Right cardiac atrium (tissue), 5 donors: ENCODE measurements at regions of chr1 and their contacts with region 1.

Region 1: GRCh38 chr1:84632673-84633434 is 57.4 kb downstream of the SSX2IP start:
- DNase-seq: no peak
- ATAC-seq: peak; percentile 43 to 58
- H3K4me3 ChIP-seq: no peak overlapping the region
- H3K27ac ChIP-seq: no peak overlapping the region
- H3K4me1 ChIP-seq: peaks cover 1% of the 10 kb centered on the region
- H3K27me3 ChIP-seq: no peaks in the 10 kb centered on the region

Region 2: DNA sequence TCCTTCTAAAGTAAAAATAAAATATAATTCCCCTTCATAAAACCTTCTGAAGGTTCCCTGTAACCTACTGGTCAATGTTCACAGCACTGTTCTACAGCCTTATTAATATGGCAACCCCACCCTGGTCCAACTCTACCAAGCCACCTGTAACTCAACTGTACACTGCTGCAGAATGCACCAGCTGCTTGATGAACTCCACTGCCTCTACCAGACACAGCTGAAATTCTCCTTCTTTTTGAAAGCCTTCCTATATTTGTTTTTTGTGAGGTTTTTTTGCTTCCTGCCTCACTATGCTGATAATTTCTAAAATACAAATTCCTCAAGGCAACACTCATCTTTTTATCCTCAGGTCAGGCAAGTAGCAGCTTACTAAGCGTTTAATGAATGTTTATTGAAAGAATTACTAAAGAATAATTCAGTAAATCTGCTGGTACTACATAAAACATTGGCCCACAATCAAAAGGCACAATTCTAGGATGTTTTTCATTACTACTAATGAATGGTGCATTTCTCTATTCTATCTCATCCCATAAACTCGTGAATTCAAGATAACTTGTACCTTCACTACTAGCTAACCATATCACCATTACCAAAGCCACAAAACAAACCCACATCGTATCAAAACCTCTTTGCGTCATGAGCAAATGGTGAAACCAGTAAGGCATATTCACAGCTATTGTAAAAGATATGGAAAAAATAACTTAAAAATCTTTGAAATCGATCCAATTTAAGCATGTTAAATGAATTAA is 55.0 kb after region 1 on chr1:
- intact Hi-C with region 1: no loop called
- DNase-seq: no peak
- ATAC-seq: no peak
- H3K4me3 ChIP-seq: no peak overlapping the region
- H3K27ac ChIP-seq: no peak overlapping the region
- H3K4me1 ChIP-seq: no peaks in the 10 kb centered on the region
- H3K27me3 ChIP-seq: no peaks in the 10 kb centered on the region

Region 3: DNA sequence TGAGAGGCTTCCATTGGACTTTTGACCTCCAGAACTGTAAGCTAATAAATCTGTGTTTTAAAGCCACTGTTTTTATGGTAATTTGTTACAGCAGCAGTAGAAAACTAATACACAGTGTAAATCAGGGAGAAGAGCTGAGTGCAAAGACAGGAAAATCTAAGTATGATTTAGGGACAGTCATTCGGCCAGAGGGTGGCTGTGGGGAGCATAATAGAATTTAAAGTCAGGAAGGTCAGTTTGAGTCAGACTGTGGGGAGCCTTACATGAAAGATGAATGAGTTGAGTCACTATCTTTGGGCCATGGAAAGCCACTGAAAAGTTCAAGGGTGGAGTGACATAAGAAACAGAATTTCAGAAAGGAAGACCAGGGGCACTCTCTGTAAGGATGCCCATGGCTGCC is 109.8 kb after region 1 on chr1:
- intact Hi-C with region 1: loop called in 1 of 4 experiments (anchors 10 kb)
- DNase-seq: no peak
- ATAC-seq: no peak
- H3K4me3 ChIP-seq: no peak overlapping the region
- H3K27ac ChIP-seq: no peak overlapping the region
- H3K4me1 ChIP-seq: no peaks in the 10 kb centered on the region
- H3K27me3 ChIP-seq: no peaks in the 10 kb centered on the region